ENCODE measurements at regions of chr12 and their contacts with region 1.

Region 1: GRCh38 chr12:113221181-113221997 is at the start of gene TPCN1:
- DNase-seq: peak; percentile 98 to 100 (median 99)

Region 2: GRCh38 chr12:113261847-113262470 is 40.6 kb after region 1 on chr12:
- intact Hi-C with region 1: loop called (anchors 1 kb)
- DNase-seq: peak in 1 of 10 donors; percentile 29